ENCODE measurements at regions of chrX and their contacts with region 1.

Region 1: DNA sequence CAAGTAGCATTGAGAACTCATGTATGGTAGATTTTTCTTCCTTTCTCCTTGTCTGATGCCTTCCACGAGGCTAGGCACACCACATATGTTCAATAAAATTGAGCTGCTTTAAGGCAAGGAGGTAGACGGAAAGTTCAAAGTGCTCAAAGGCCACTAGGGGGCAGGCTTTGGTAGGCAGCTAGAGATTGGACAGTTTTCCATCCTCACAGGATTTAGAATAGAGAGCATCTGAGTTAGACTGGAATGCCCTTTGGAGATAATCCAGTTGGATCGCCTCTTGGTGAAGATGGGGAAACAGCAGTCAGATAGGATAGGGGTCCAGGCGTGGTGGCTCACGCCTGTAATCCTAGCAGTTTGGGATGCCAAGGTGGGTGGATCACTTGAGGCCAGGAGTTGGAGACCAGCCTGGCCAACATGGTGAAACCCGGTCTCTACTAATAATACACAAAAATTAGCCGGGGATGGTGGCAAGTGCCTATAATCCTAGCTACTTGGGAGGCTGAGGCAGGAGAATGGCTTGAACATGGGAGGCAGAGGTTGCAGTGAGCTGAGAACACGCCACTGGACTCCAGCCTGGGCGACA is 30.4 kb downstream of the ELF4 start:
- DNase-seq: peak; percentile 70
- H3K4me3 Mint-ChIP-seq: no peak overlapping the region
- H3K27ac Mint-ChIP-seq: no peak overlapping the region
- H3K4me1 Mint-ChIP-seq: peaks cover 51% of the 10 kb centered on the region
- H3K27me3 Mint-ChIP-seq: no peaks in the 10 kb centered on the region

Region 2: DNA sequence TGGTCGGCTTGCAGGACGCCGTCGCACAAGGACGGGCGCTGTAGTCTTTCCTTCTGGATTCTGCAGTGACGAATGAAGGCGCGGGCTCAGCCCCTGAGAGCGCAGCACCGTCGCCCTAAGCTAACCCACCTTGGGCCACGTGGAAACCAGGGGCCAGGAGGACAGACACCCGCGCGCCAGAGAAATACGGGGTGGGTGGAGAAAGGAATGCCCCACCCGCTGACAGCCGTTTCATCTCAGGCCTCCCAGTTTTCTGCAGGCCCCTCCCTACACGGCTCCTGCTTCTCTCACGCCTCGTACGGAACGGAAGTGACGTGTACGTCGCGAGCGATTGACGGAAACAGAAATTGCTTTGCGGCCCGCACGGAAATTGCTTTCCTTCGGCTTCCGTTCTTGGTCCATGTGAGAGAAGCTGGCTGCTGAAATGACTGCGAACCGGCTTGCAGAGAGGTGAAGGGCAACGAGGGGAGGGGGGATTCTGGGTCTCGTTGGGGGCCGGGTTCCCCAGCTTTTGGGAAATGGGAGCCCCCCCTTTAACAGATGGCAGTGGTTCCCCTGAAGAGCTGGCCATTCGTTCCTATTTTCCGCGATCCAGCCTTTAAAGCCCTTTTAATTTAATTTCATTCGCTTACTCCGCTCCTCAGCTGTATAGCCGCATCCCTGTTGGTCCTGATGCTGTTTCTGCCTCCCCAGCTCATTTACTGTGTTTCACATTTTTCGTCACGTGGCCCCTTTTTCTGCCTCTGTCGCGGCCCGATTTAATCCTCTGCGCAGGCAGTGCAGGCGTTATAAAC is 173.9 kb before region 1 on chrX and contains the start of gene UTP14A:
- CTCF ChIA-PET with region 1: no interaction called
- DNase-seq: peak; percentile 91
- H3K4me3 Mint-ChIP-seq: peak within 1 kb of the TSS; percentile 85
- H3K27ac Mint-ChIP-seq: peak within 1 kb of the TSS; percentile 77
- H3K4me1 Mint-ChIP-seq: peaks cover 22% of the 10 kb centered on the region
- H3K27me3 Mint-ChIP-seq: no peaks in the 10 kb centered on the region

Region 3: GRCh38 chrX:130060122-130061069 is 19.5 kb before region 1 on chrX:
- CTCF ChIA-PET with region 1: interaction called, 12 read pairs
- DNase-seq: peak; percentile 83
- H3K4me3 Mint-ChIP-seq: peak overlapping the region; percentile 65
- H3K27ac Mint-ChIP-seq: no peak overlapping the region
- H3K4me1 Mint-ChIP-seq: peaks cover 6% of the 10 kb centered on the region
- H3K27me3 Mint-ChIP-seq: peaks cover 4% of the 10 kb centered on the region

Region 4: DNA sequence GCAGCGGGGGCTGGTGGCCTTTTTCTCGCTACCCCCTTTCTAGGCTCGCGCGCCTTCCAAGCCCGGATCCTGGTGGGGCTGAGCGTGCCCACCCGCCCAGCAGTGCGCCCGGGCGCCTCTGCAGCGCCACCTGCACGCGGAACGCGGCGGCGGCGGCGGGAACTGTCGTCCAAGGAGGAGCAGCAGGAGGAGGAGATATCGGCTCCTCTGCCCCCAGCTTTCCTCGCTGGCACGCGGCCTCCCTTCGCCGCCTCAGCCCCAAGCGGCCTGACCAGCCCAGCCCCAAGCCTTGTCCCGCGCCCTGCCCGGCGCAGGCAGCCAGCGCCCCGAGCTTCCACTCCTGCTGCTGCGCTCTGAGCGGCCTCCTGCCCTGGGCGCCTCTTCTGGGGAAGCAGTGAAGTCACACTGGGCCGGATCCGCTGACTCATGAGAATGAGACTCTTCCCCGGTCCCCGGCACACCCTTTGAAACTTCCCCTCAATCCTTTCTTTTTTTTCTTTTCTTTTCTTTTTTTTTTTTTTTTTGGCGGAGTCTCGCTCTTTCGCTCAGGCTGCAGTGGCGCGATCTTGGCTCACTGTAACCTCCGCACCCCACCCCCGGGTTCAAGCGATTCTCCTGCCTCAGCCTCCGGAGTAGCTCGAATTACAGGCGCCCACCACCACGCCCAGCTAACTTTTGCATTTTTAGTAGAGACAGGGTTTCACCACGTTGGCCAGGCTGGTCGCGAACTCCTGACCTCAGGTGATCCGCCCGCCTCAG is 41.0 kb after region 1 on chrX:
- CTCF ChIA-PET with region 1: interaction called, 68 read pairs
- DNase-seq: peak; percentile 69
- H3K4me3 Mint-ChIP-seq: peak overlapping the region; percentile 53
- H3K27ac Mint-ChIP-seq: no peak overlapping the region
- H3K4me1 Mint-ChIP-seq: peaks cover 18% of the 10 kb centered on the region
- H3K27me3 Mint-ChIP-seq: no peaks in the 10 kb centered on the region

Region 5: DNA sequence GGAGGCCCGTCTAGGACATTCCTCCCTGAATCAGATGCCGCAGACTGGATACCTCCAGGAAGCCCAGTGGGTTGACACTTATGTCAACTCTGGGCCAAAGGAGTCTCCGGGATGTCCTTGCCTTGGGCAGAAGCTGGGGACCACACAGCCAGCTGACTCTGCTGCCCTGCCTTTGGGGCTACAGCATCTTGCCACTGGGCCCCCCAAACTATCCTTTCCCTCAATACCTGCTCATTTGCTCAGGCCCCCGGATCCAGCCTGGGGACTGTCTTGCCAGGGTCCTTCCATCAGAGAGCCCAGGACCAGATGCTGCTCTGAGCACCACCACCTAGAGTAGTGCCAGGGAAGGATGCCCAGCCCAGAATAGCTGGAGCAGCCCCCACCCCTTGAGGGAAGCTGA is 110.9 kb after region 1 on chrX:
- CTCF ChIA-PET with region 1: interaction called, 67 read pairs
- DNase-seq: no peak
- H3K4me3 Mint-ChIP-seq: no peak overlapping the region
- H3K27ac Mint-ChIP-seq: no peak overlapping the region
- H3K4me1 Mint-ChIP-seq: peaks cover 12% of the 10 kb centered on the region
- H3K27me3 Mint-ChIP-seq: peaks cover 3% of the 10 kb centered on the region

Region 6: DNA sequence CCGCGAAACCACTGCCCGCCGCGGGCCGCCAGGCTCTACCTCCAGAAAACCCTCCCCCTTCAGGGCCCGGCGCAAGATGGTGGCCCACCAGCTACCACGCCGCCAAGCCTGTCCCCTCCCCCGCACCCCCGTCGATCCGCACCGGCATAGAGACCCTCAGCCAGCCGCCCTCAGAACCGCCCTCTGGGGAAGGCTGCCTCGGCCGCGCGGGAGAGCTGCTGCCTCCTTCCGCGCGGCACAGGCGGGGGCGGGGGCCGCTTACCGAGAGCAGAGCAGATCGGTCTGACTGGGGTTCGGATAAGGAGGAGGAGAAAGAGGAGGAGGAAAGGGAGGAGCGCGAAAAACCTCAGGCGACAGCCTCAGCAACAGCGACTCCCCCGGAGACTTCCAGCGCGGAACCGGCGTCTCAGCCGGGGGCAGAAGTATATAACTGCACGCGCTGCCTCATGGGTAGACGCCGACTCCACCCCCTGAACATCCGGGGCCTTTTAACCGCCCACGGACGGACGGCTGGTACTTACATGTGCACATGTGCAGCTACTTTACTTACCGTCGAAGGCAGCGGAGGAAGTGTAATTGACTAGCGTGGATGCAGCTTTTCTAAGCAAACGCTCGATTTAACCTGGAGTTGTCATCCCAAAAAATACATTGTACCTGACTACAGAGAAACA is 188.7 kb after region 1 on chrX and contains the start of gene ZNF280C:
- CTCF ChIA-PET with region 1: no interaction called
- DNase-seq: peak; percentile 93
- H3K4me3 Mint-ChIP-seq: peak within 1 kb of the TSS; percentile 84
- H3K27ac Mint-ChIP-seq: peak within 1 kb of the TSS; percentile 88
- H3K4me1 Mint-ChIP-seq: peaks cover 31% of the 10 kb centered on the region
- H3K27me3 Mint-ChIP-seq: peaks cover 4% of the 10 kb centered on the region

Measured in activated naive CD4-positive, alpha-beta T cell treated with anti-CD3 and anti-CD28 coated beads, Interleukin-2, amount 10 ng/mL, durations not matched to agents 7 days and 5 days (primary cell).